CD8-positive, alpha-beta T cell (primary cell): ENCODE measurements at regions of chrX and their contacts with region 1.

Region 1: DNA sequence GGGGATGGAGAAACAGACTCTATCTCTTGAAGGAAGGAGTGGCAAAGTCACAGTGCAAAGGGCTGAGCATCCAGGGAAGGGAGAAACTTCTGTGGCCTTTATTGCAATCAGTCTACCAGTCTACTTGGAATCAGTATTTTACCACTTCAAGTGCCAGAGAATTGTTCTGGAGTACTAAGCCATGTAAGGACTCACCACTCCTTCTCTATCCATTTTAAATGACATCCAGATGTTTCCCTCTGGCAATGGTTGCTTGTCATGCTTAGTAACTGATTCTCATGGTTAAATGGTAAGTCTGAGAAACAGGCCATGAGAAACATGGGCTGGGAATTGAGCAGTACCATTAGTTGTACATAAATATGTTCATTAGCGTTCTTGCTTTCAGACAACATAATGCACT is 21.1 kb upstream of the SMIM10 start:
- DNase-seq: no peak
- ATAC-seq: no peak
- H3K4me3 ChIP-seq: no peak overlapping the region
- H3K4me3 Mint-ChIP-seq: no peak overlapping the region
- H3K27ac ChIP-seq: no peak overlapping the region
- H3K27ac Mint-ChIP-seq: no peak overlapping the region
- H3K4me1 ChIP-seq: no peaks in the 10 kb centered on the region
- H3K4me1 Mint-ChIP-seq: no peaks in the 10 kb centered on the region
- H3K27me3 ChIP-seq: no peaks in the 10 kb centered on the region
- H3K27me3 Mint-ChIP-seq: peaks cover 2% of the 10 kb centered on the region
- CTCF ChIP-seq: no peak

Region 2: DNA sequence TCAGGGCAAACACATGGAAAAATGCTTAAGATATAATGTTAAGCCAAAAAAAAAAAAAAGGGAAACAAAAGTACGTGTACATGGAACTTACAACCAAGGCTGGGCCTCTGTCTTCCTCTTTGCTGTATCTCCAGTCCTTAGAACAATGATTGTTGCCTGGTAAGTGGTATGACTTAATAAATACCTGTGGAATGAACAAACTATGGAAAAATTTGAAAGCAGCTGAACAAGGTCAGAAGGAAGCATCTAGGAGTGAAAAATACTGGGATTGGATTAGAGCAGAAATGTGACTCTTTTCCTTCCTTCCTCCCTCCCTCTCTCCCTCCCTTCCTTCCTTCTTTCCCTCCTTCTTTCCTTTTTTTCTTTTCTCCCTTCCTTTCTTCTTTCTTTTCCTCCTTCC is 33.2 kb before region 1 on chrX:
- CTCF ChIA-PET with region 1: no interaction called
- POLR2A ChIA-PET with region 1: no interaction called
- intact Hi-C with region 1: no loop called
- DNase-seq: no peak
- ATAC-seq: no peak
- H3K4me3 ChIP-seq: no peak overlapping the region
- H3K4me3 Mint-ChIP-seq: no peak overlapping the region
- H3K27ac ChIP-seq: no peak overlapping the region
- H3K27ac Mint-ChIP-seq: no peak overlapping the region
- H3K4me1 ChIP-seq: no peaks in the 10 kb centered on the region
- H3K4me1 Mint-ChIP-seq: no peaks in the 10 kb centered on the region
- H3K27me3 ChIP-seq: no peaks in the 10 kb centered on the region
- H3K27me3 Mint-ChIP-seq: peaks cover 2% of the 10 kb centered on the region
- CTCF ChIP-seq: no peak

Region 3: DNA sequence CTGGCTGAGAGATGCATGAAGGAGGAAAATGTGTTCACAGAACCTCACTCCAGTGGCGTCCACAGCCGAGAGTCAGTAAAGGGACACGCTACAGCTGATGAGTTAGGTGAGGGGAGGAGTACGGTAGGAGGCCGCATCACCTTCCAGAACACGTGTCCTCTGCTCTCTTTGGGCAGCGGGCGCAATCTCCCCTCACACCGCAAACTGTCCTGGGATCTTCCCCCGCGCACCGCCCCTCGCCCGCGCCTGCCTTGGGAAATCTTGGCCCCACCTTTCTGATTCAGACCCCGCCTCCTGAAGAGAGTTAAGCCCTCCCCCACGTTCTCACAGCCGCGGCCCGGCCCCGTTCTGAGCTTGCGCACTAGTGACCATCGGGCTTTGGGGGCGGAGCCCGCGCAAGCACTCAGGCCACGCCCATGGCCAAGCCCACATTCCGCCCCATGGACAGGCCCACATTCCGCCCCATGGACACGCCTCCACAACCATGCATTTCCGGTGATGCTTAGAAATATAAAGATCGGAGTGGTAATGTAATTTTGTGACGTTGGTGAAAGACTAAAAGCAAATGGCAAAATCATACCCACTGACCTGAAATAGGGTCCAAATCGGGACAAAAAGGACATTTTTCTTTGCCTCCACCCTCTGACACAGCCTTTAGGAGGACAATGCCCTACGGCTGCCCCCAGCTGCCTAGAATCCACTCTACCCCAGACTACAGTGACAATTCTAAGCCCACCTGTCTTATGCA is 34.3 kb after region 1 on chrX:
- CTCF ChIA-PET with region 1: interaction called, 7 read pairs
- POLR2A ChIA-PET with region 1: no interaction called
- intact Hi-C with region 1: loop called (anchors 1 to 2 kb)
- DNase-seq: peak; percentile 72 to 93 (median 89)
- ATAC-seq: peak; percentile 98
- H3K4me3 ChIP-seq: peak overlapping the region; percentile 52 to 57
- H3K4me3 Mint-ChIP-seq: peak overlapping the region; percentile 88
- H3K27ac ChIP-seq: peak overlapping the region; percentile 38 to 72
- H3K27ac Mint-ChIP-seq: peak overlapping the region; percentile 91
- H3K4me1 ChIP-seq: peaks cover 9% of the 10 kb centered on the region
- H3K4me1 Mint-ChIP-seq: peaks cover 12% of the 10 kb centered on the region
- H3K27me3 ChIP-seq: no peaks in the 10 kb centered on the region
- H3K27me3 Mint-ChIP-seq: no peaks in the 10 kb centered on the region
- CTCF ChIP-seq: no peak

Region 4: GRCh38 chrX:135060697-135061096 is 91.0 kb after region 1 on chrX:
- CTCF ChIA-PET with region 1: no interaction called
- POLR2A ChIA-PET with region 1: no interaction called
- intact Hi-C with region 1: no loop called
- DNase-seq: no peak
- ATAC-seq: no peak
- H3K4me3 ChIP-seq: no peak overlapping the region
- H3K4me3 Mint-ChIP-seq: no peak overlapping the region
- H3K27ac ChIP-seq: no peak overlapping the region
- H3K27ac Mint-ChIP-seq: no peak overlapping the region
- H3K4me1 ChIP-seq: no peaks in the 10 kb centered on the region
- H3K4me1 Mint-ChIP-seq: no peaks in the 10 kb centered on the region
- H3K27me3 ChIP-seq: no peaks in the 10 kb centered on the region
- H3K27me3 Mint-ChIP-seq: no peaks in the 10 kb centered on the region
- CTCF ChIP-seq: no peak

Region 5: GRCh38 chrX:135086197-135086854 is 116.6 kb after region 1 on chrX:
- CTCF ChIA-PET with region 1: interaction called, 38 read pairs
- POLR2A ChIA-PET with region 1: no interaction called
- intact Hi-C with region 1: loop called in 1 of 2 experiments (anchors 1 kb)
- DNase-seq: peak in 6 of 9 experiments; percentile 11 to 79 (median 42)
- ATAC-seq: peak; percentile 99
- H3K4me3 ChIP-seq: no peak overlapping the region
- H3K4me3 Mint-ChIP-seq: no peak overlapping the region
- H3K27ac ChIP-seq: no peak overlapping the region
- H3K27ac Mint-ChIP-seq: no peak overlapping the region
- H3K4me1 ChIP-seq: no peaks in the 10 kb centered on the region
- H3K4me1 Mint-ChIP-seq: peaks cover 5% of the 10 kb centered on the region
- H3K27me3 ChIP-seq: no peaks in the 10 kb centered on the region
- H3K27me3 Mint-ChIP-seq: peaks cover 3% of the 10 kb centered on the region
- CTCF ChIP-seq: peak; percentile 60

Region 6: DNA sequence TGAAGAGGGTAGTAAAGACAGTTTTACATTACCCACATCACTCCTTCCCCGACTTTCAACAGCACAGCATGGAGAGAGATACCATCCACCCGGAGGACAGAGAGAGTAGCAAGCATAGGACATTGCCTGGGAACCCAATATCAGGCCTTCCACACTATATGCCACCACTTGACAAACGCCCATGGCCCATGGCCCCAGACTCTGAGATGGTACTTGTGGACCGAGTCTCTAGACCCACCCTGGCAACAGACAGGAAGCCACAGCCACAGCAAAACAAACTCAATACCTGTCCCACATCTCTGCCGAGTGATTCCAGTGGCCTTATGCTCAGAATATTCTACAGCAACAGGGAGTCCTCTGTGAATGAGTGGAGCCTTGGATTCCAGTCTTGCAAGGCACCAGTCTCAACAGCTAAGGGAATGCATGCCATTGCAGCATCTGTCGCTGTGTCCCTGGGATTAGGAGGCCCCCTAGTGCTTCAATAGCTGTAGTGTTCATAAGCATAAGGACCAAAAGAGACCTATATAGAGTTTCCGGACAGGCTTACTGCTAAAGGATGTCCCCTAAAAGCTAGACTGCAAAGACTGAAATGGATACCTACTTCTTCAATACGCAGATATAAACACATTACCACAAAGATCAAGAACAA is 216.2 kb after region 1 on chrX:
- CTCF ChIA-PET with region 1: no interaction called
- POLR2A ChIA-PET with region 1: no interaction called
- intact Hi-C with region 1: loop called in 1 of 2 experiments (anchors 5 kb)
- DNase-seq: peak in 6 of 9 experiments; percentile 1 to 60 (median 24)
- ATAC-seq: peak; percentile 42
- H3K4me3 ChIP-seq: no peak overlapping the region
- H3K4me3 Mint-ChIP-seq: no peak overlapping the region
- H3K27ac ChIP-seq: no peak overlapping the region
- H3K27ac Mint-ChIP-seq: no peak overlapping the region
- H3K4me1 ChIP-seq: no peaks in the 10 kb centered on the region
- H3K4me1 Mint-ChIP-seq: peaks cover 6% of the 10 kb centered on the region
- H3K27me3 ChIP-seq: no peaks in the 10 kb centered on the region
- H3K27me3 Mint-ChIP-seq: peaks cover 20% of the 10 kb centered on the region
- CTCF ChIP-seq: no peak

Region 7: GRCh38 chrX:135477576-135477975 is 507.9 kb after region 1 on chrX:
- CTCF ChIA-PET with region 1: no interaction called
- POLR2A ChIA-PET with region 1: no interaction called
- intact Hi-C with region 1: loop called (anchors 5 kb)
- DNase-seq: peak in 8 of 9 experiments; percentile 1 to 66 (median 36)
- ATAC-seq: peak; percentile 67
- H3K4me3 ChIP-seq: no peak overlapping the region
- H3K4me3 Mint-ChIP-seq: no peak overlapping the region
- H3K27ac ChIP-seq: no peak overlapping the region
- H3K27ac Mint-ChIP-seq: no peak overlapping the region
- H3K4me1 ChIP-seq: no peaks in the 10 kb centered on the region
- H3K4me1 Mint-ChIP-seq: peaks cover 3% of the 10 kb centered on the region
- H3K27me3 ChIP-seq: no peaks in the 10 kb centered on the region
- H3K27me3 Mint-ChIP-seq: no peaks in the 10 kb centered on the region
- CTCF ChIP-seq: no peak